HEK293 (cell line): ENCODE measurements at regions of chr2 and their contacts with region 1.

Region 1: GRCh38 chr2:130332271-130333073 is 10.2 kb upstream of the IMP4 start:
- H3K4me3 ChIP-seq: peak overlapping the region; percentile 6
- H3K27ac ChIP-seq: no peak overlapping the region
- H3K4me1 ChIP-seq: no peaks in the 10 kb centered on the region
- CTCF ChIP-seq: peak; percentile 86

Region 2: GRCh38 chr2:129936334-129936934 is 396.0 kb before region 1 on chr2:
- CTCF ChIA-PET with region 1: interaction called, 13 read pairs
- POLR2A ChIA-PET with region 1: no interaction called
- H3K4me3 ChIP-seq: no peak overlapping the region
- H3K27ac ChIP-seq: no peak overlapping the region
- H3K4me1 ChIP-seq: no peaks in the 10 kb centered on the region
- CTCF ChIP-seq: no peak

Region 3: GRCh38 chr2:130181325-130181879 is 151.1 kb before region 1 on chr2 and contains the start of gene SMPD4:
- CTCF ChIA-PET with region 1: interaction called, 41 read pairs
- POLR2A ChIA-PET with region 1: interaction called, 8 read pairs
- H3K4me3 ChIP-seq: peak within 1 kb of the TSS; percentile 93
- H3K27ac ChIP-seq: peak within 1 kb of the TSS; percentile 79
- H3K4me1 ChIP-seq: 0 out of 2 replicates have a peak, but pooled peaks cover 5% of the 10 kb centered on the region
- CTCF ChIP-seq: no peak